Heart left ventricle (tissue), 16 donors: ENCODE measurements at regions of chr22 and their contacts with region 1.

Region 1: DNA sequence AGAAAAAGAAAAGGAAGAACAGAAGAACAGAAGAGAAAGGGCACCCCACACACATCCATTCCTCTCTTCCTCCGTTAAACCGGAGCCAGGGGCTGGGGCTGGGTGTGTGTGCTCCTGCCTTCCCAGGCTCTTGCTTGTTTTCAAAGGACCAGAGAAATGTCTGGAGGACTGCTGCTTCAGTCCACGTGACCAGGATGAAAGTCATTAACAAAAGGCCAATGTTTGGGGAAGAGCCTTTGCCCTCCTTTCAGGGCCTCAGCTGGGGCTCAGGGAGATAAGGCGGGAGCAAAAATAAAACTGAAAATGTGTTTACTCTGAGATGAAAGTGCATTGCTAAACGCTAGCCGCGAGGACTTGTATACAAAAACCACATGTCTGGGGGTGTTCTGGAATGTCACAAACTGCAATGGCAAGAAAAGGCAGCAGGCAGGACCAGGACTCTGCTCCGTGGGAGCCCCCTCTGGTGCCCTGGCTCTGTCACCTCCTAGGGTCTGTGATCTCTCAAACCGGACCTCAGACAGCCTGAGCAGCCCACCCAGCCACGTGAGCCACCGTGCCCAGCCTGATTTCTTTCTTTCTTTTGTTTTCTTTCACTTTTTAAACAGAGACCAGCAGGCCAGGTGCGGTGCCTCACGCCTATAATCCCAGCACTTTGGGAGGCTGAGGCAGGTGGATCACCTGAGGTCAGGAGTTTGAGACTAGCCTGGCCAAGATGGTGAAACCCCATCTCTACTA is 31.6 kb upstream of the MYH9 start:
- DNase-seq: peak in 4 of 5 donors; percentile 54 to 69 (median 62)
- ATAC-seq: peak; percentile 49 to 82 (median 77)
- H3K4me3 ChIP-seq: peak overlapping the region in 9 of 12 donors; percentile 2 to 39 (median 26)
- H3K27ac ChIP-seq: peak overlapping the region; percentile 31 to 86 (median 81)
- H3K4me1 ChIP-seq: peaks cover 0 to 55% (median 18%) of the 10 kb centered on the region in 12 donors
- H3K27me3 ChIP-seq: no peaks in the 10 kb centered on the region
- CTCF ChIP-seq: no peak
- POLR2A ChIP-seq: no peak

Region 2: GRCh38 chr22:36439481-36440271 is 20.3 kb after region 1 on chr22:
- intact Hi-C with region 1: loop called in 1 of 10 experiments (anchors 1 kb)
- DNase-seq: peak; percentile 65 to 88 (median 84)
- ATAC-seq: peak; percentile 66 to 98 (median 90)
- H3K4me3 ChIP-seq: no peak overlapping the region
- H3K27ac ChIP-seq: peak overlapping the region in 8 of 12 donors; percentile 24 to 69 (median 44)
- H3K4me1 ChIP-seq: peaks cover 0 to 48% (median 0%) of the 10 kb centered on the region in 12 donors
- H3K27me3 ChIP-seq: no peaks in the 10 kb centered on the region
- CTCF ChIP-seq: no peak
- POLR2A ChIP-seq: no peak

Region 3: GRCh38 chr22:36454916-36455570 is 35.7 kb after region 1 on chr22:
- intact Hi-C with region 1: loop called in 1 of 10 experiments (anchors 5 kb)
- DNase-seq: peak; percentile 94 to 97 (median 95)
- ATAC-seq: peak; percentile 83 to 91 (median 87)
- H3K4me3 ChIP-seq: peak overlapping the region; percentile 15 to 67 (median 50)
- H3K27ac ChIP-seq: peak overlapping the region; percentile 81 to 99 (median 93)
- H3K4me1 ChIP-seq: peaks cover 15 to 76% (median 53%) of the 10 kb centered on the region in 12 donors
- H3K27me3 ChIP-seq: no peaks in the 10 kb centered on the region
- CTCF ChIP-seq: peak in 2 of 12 donors; percentile 32 to 45
- POLR2A ChIP-seq: peak; percentile 60 to 84

Region 4: GRCh38 chr22:36790648-36791047 is 371.3 kb after region 1 on chr22:
- intact Hi-C with region 1: no loop called
- DNase-seq: no peak
- ATAC-seq: no peak
- H3K4me3 ChIP-seq: no peak overlapping the region
- H3K27ac ChIP-seq: no peak overlapping the region
- H3K4me1 ChIP-seq: no peaks in the 10 kb centered on the region
- H3K27me3 ChIP-seq: peaks cover 0 to 64% (median 10%) of the 10 kb centered on the region in 9 donors
- CTCF ChIP-seq: no peak
- POLR2A ChIP-seq: no peak